Activated T-helper 2 cell treated with anti-CD3 and anti-CD28 coated beads, Interferon-gamma antibody, Interleukin-2, Interleukin-4, amounts not matched to agents 10 μg/mL and 5 μg/mL and 100 μg/mL, durations not matched to agents 14 hours and 24 hours and 36 hours (primary cell): ENCODE measurements at regions of chr20 and their contacts with region 1.

Region 1: DNA sequence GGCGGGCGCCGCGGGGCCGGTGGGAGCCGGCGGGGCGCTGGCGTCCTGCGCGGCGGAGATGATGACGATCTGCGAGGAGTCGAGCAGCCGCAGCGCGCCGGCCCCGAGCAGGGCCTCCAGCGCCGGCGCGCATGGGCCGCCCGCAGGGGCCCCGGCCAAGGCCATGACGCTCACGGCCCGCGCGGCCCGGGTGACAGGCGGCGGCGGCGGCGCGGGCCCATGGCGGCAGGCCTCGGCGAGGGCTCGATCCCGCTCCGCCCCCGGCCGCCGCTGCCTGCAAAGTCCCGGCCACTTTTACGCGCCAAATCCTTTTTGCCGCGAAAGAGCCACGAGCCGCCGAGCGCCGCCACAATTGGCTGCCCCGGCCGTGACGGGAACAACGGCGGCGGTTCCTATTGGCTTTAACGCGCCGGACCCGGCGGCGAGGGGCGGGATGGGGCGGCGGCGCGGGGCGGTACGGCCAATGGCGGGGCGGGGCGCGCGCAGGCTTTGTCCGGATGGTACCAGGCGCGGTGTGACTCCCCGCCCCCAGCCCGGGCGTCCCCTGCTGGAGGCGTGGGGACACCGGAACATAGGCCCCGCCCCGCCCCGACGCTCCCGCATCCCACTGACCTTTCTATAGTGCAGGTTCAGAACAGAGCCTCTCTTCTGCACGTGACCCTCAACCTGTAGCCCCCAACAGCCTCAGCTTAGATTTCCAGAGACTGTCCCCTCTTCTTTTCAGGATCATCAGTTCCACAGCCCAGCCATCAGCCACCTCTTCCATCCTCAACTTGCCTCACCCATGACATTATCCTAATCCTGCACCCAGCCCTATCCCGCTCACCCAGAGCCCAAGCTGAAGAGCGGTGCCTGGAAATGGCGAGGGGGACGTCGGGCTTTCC is at the start of gene E2F1:
- DNase-seq: peak; percentile 96
- H3K4me3 Mint-ChIP-seq: peak within 1 kb of the TSS; percentile 92
- H3K27ac Mint-ChIP-seq: peak within 1 kb of the TSS; percentile 91
- H3K4me1 Mint-ChIP-seq: peaks cover 66% of the 10 kb centered on the region
- H3K27me3 Mint-ChIP-seq: no peaks in the 10 kb centered on the region
- total RNA-seq, gene E2F1: 63.8 and 64.2 TPM in 2 replicates

Region 2: DNA sequence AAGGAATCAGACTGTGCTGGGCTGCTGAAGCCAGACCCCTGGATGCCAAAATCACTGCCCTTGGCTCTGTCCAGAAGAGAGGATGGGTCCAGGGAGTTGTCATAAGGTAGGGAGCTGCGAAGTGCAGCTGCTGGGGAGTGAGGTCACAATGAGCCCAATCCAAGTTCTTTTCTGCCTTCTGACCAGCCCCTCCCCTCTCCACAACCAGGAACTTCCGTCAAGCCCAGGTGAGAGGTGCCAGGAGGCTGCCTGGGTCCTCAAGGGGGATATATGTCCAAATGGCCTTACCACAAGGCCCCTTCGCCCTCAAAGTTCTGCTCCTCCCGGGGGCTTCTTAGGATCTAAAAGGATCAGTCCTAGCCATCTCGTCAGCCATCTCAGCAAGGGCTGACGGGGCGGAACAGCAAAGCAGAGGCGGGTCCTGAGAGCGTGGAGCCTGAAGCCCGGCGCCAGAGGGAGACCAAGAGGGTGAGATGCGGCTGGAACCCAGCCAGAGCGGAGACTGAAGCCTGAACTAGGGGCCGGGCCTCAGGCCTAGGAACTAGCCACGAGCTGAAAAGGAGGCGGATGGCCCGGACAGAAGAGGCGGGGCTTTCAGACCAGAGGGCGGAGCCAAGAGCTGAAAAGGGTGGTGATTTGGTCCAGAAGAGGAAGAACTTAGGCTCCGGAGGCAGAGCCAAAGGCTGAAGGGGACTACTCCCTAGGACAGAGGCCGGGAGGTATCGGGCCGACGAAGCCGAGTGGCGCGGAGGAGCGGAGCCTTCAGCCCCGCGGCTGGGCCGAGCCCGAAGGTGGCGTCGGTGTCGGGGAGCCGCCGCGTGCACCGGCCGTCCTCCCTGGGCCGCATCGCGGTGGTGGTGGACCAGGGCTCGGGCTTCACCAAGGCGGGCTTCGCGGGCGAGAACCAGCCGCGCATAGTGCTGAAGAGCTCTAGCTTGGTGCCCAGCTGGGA is 19.8 kb before region 1 on chr20 and contains the start of gene ACTL10:
- intact Hi-C with region 1: loop called (anchors 1 kb)
- DNase-seq: peak; percentile 79
- H3K4me3 Mint-ChIP-seq: peak within 1 kb of the TSS; percentile 85
- H3K27ac Mint-ChIP-seq: peak within 1 kb of the TSS; percentile 85
- H3K4me1 Mint-ChIP-seq: peaks cover 24% of the 10 kb centered on the region
- H3K27me3 Mint-ChIP-seq: no peaks in the 10 kb centered on the region
- total RNA-seq, gene ACTL10: 2.6 and 3.3 TPM in 2 replicates

Region 3: DNA sequence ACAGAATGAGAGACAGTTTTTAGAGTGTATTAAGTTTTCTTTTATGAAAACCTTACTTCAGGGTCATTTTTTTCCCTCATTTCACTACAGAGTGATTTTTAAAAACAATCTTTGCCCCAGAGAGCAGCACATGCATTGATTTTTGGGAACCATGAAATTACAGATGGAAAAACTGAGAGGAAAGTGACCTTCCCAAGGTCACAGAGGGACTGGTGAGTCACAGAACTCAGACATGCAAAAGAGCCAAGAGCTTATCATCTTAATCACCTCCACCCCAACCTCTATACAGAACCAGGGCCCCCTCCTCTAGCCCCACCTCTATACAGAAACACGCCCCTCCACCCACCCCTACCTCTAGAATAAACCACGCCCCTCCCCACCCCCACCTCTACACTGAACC is 23.1 kb after region 1 on chr20:
- intact Hi-C with region 1: loop called (anchors 2 kb)
- DNase-seq: no peak
- H3K4me3 Mint-ChIP-seq: no peak overlapping the region
- H3K27ac Mint-ChIP-seq: peak overlapping the region; percentile 84
- H3K4me1 Mint-ChIP-seq: peaks cover 22% of the 10 kb centered on the region
- H3K27me3 Mint-ChIP-seq: no peaks in the 10 kb centered on the region

Region 4: DNA sequence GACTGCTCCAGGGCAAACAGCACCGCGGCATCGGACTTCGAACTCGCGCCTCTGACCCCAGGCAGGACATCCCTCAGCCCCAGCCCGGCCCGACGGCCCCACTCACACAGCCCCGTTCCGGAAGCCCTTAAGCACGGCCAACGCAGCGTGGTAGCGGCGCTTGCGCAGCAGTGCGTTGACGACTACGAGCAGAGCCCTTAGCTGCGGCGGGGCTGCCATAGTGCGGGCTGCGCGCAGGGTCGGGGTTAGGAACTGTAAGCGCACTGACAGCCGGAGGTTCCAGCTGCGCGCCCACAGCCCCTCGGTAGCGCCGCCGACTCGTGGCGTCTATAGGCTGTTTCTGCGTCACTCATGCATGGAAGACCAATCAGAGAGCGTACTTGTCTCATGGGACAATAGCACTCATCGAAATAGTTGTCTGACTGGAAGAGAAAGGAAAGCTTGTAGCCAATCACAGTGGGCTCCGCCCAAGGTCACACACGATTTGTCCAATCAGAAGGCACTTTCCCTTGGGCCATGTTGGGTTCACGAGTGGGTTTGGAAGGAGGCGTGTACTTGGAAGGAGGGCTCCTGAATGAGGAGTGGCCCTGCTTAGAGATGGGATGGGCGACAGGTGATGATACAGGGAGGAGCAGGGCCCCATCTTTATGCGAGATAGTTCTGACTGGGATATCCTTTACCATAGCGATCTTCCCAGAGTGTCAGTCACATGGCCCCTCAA is 33.8 kb after region 1 on chr20 and contains the start of gene PXMP4:
- intact Hi-C with region 1: loop called (anchors 1 kb)
- DNase-seq: peak; percentile 91
- H3K4me3 Mint-ChIP-seq: peak within 1 kb of the TSS; percentile 82
- H3K27ac Mint-ChIP-seq: peak within 1 kb of the TSS; percentile 92
- H3K4me1 Mint-ChIP-seq: peaks cover 14% of the 10 kb centered on the region
- H3K27me3 Mint-ChIP-seq: no peaks in the 10 kb centered on the region
- total RNA-seq, gene PXMP4: 7.4 TPM in 2 replicates

Region 5: DNA sequence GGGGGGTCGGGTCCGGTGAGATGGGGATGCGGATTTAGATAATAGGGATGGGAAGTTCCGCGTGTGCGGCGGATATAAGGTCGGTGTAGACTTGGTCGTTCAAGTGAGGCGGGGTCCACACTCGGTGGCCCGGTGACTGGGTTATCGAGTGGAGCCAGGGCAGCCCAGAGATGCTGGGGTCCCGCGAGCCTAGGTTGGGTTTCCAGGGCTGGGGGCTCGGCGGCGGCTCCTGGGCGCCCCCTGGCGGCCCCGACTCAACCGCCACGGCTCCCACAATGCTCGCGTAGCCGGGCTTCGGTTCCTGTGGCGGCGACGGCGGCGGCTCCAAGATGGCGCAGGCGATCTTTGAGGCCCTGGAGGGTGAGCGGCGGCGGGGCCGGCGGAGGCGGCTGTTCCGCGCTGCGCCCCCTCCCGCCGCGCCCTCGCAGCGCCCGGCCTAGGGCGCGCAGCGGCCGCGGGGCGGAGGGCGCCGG is 45.4 kb after region 1 on chr20 and contains the start of gene ZNF341:
- intact Hi-C with region 1: loop called (anchors 1 kb)
- DNase-seq: peak; percentile 88
- H3K4me3 Mint-ChIP-seq: peak within 1 kb of the TSS; percentile 89
- H3K27ac Mint-ChIP-seq: peak within 1 kb of the TSS; percentile 94
- H3K4me1 Mint-ChIP-seq: peaks cover 18% of the 10 kb centered on the region
- H3K27me3 Mint-ChIP-seq: no peaks in the 10 kb centered on the region
- total RNA-seq, gene ZNF341: 6.8 and 7.0 TPM in 2 replicates

Region 6: GRCh38 chr20:33770005-33770404 is 83.7 kb after region 1 on chr20:
- intact Hi-C with region 1: no loop called
- DNase-seq: no peak
- H3K4me3 Mint-ChIP-seq: no peak overlapping the region
- H3K27ac Mint-ChIP-seq: no peak overlapping the region
- H3K4me1 Mint-ChIP-seq: peaks cover 19% of the 10 kb centered on the region
- H3K27me3 Mint-ChIP-seq: no peaks in the 10 kb centered on the region

Region 7: DNA sequence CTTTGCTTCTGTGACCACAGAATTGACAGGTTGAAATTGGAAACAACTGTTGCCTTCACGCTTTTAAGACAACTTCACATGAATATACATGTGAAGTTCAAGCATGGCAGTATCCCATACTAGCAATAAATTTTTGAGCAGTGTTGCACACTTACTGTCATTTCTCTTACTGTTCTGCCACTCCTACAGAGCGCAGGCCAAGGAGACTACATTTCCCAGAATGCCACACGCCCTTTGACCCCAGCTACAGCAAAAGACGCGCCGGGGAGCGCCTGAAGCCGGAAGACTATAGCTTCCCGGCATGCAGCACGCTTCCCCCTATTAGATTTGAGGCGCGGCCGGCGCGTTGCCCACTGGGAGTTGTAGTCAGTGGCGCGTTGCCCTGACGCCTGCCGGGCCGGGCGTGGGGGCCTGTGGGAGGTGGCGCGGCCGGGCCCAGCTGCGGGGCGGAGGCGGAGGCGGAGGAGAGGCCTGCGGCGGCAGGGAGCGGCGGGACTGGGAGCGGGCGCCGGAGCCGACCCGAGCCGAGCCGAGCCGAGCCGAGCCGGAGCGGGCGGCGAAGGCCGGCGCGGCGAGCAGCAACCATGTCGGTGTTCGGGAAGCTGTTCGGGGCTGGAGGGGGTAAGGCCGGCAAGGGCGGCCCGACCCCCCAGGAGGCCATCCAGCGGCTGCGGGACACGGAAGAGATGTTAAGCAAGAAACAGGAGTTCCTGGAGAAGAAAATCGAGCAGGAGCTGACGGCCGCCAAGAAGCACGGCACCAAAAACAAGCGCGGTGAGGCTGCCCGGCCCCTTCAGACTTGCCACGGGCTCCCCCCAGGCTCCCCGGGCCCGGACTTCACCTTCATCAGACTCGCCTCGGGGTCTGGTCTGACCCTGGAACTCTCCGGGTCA is 124.8 kb after region 1 on chr20 and contains the start of gene CHMP4B:
- intact Hi-C with region 1: loop called (anchors 5 kb)
- DNase-seq: peak; percentile 98
- H3K4me3 Mint-ChIP-seq: peak within 1 kb of the TSS; percentile 99
- H3K27ac Mint-ChIP-seq: peak within 1 kb of the TSS; percentile 95
- H3K4me1 Mint-ChIP-seq: peaks cover 38% of the 10 kb centered on the region
- H3K27me3 Mint-ChIP-seq: peaks cover 2% of the 10 kb centered on the region
- total RNA-seq, gene CHMP4B: 113 and 116 TPM in 2 replicates

Region 8: GRCh38 chr20:33992923-33993575 is 306.7 kb after region 1 on chr20:
- intact Hi-C with region 1: loop called (anchors 10 kb)
- DNase-seq: peak; percentile 99
- H3K4me3 Mint-ChIP-seq: peak overlapping the region; percentile 91
- H3K27ac Mint-ChIP-seq: peak overlapping the region; percentile 84
- H3K4me1 Mint-ChIP-seq: peaks cover 40% of the 10 kb centered on the region
- H3K27me3 Mint-ChIP-seq: no peaks in the 10 kb centered on the region